HAP-1 (cell line): ENCODE measurements at regions of chr9 and their contacts with region 1.

Region 1: GRCh38 chr9:98848450-98849149 is 41.1 kb downstream of the GALNT12 start:
- DNase-seq: peak; percentile 80 to 91
- H3K4me3 ChIP-seq: no peak overlapping the region
- H3K4me1 ChIP-seq: no peaks in the 10 kb centered on the region
- H3K27me3 ChIP-seq: no peaks in the 10 kb centered on the region

Region 2: GRCh38 chr9:98584059-98584458 is 264.5 kb before region 1 on chr9:
- in situ Hi-C with region 1: no loop called
- DNase-seq: no peak
- H3K4me3 ChIP-seq: no peak overlapping the region
- H3K4me1 ChIP-seq: no peaks in the 10 kb centered on the region
- H3K27me3 ChIP-seq: peaks cover 6% of the 10 kb centered on the region; the same call in 1 of the 2 replicates

Region 3: DNA sequence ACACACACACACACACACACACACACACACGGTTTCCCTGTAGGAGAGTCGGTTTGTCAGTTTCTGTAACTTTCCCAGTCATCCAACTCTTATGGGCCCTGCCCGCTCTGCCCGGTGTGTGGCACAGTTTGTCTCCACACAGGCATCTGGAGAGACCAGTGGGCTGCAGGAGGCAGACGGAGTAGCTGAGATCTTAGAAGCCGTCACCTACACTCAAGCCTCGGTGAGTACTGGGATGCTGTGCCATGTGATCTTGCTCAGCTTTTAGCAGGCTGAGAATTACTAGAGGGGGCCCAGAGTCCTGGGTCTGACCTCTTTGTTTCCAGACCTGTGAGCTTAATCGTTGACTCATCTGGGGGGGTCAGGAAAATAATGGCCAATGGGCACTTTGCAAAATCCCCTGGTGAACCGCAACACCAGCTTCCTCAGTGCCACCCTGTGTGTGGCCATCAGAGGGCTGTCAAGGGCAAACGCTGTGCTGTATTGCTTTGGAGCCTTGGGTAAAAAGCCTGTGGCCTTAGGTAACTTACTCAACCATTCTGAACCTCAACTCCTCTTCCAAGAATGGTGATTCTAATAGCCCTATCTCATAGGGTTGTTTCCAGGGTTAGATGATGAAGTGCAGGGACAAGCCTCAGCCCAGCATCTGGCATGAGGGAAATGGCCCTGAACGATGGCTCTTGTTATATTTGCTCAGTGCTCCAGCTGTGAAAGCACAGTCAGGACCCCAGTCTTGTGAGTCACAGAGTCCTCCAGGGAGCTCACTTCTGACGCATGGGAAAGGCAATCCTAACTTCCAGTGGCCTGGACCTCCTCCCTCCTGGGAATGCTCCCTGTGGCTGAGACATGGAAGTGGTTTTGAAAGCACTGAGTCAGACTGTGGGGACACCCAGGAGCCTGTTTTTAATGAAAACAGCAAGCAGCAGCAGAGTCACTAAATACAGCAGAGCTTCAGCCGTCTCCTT is 140.7 kb after region 1 on chr9:
- in situ Hi-C with region 1: loop called (anchors 10 kb)
- DNase-seq: no peak
- H3K4me3 ChIP-seq: no peak overlapping the region
- H3K4me1 ChIP-seq: no peaks in the 10 kb centered on the region
- H3K27me3 ChIP-seq: no peaks in the 10 kb centered on the region

Region 4: GRCh38 chr9:99130069-99130468 is 281.5 kb after region 1 on chr9:
- in situ Hi-C with region 1: loop called (anchors 5 kb)
- DNase-seq: no peak
- H3K4me3 ChIP-seq: no peak overlapping the region
- H3K4me1 ChIP-seq: peaks cover 8% of the 10 kb centered on the region
- H3K27me3 ChIP-seq: no peaks in the 10 kb centered on the region